Activated CD4-positive, alpha-beta memory T cell treated with anti-CD3 and anti-CD28 coated beads, Interleukin-2, amount 10 ng/mL, durations not matched to agents 7 days and 5 days (primary cell): ENCODE measurements at regions of chr3 and their contacts with region 1.

Region 1: GRCh38 chr3:16842272-16843270 is 42.2 kb upstream of the PLCL2 start:
- DNase-seq: peak; percentile 85
- H3K4me3 Mint-ChIP-seq: peak overlapping the region; percentile 73
- H3K27ac Mint-ChIP-seq: peak overlapping the region; percentile 99
- H3K4me1 Mint-ChIP-seq: peaks cover 67% of the 10 kb centered on the region
- H3K27me3 Mint-ChIP-seq: no peaks in the 10 kb centered on the region

Region 2: GRCh38 chr3:16723978-16724377 is 118.6 kb before region 1 on chr3:
- CTCF ChIA-PET with region 1: no interaction called
- POLR2A ChIA-PET with region 1: no interaction called
- DNase-seq: no peak
- H3K4me3 Mint-ChIP-seq: no peak overlapping the region
- H3K27ac Mint-ChIP-seq: no peak overlapping the region
- H3K4me1 Mint-ChIP-seq: no peaks in the 10 kb centered on the region
- H3K27me3 Mint-ChIP-seq: no peaks in the 10 kb centered on the region

Region 3: GRCh38 chr3:16741103-16741758 is 101.3 kb before region 1 on chr3:
- CTCF ChIA-PET with region 1: no interaction called
- POLR2A ChIA-PET with region 1: no interaction called
- DNase-seq: no peak
- H3K4me3 Mint-ChIP-seq: no peak overlapping the region
- H3K27ac Mint-ChIP-seq: no peak overlapping the region
- H3K4me1 Mint-ChIP-seq: no peaks in the 10 kb centered on the region
- H3K27me3 Mint-ChIP-seq: peaks cover 3% of the 10 kb centered on the region

Region 4: GRCh38 chr3:16828815-16829214 is 13.8 kb before region 1 on chr3:
- CTCF ChIA-PET with region 1: interaction called, 23 read pairs
- POLR2A ChIA-PET with region 1: interaction called, 25 read pairs
- DNase-seq: peak; percentile 67
- H3K4me3 Mint-ChIP-seq: no peak overlapping the region
- H3K27ac Mint-ChIP-seq: no peak overlapping the region
- H3K4me1 Mint-ChIP-seq: peaks cover 18% of the 10 kb centered on the region
- H3K27me3 Mint-ChIP-seq: peaks cover 9% of the 10 kb centered on the region

Region 5: GRCh38 chr3:17151598-17152373 is 309.2 kb after region 1 on chr3:
- CTCF ChIA-PET with region 1: interaction called, 15 read pairs
- POLR2A ChIA-PET with region 1: interaction called, 43 read pairs
- DNase-seq: peak; percentile 95
- H3K4me3 Mint-ChIP-seq: peak overlapping the region; percentile 58
- H3K27ac Mint-ChIP-seq: peak overlapping the region; percentile 85
- H3K4me1 Mint-ChIP-seq: peaks cover 51% of the 10 kb centered on the region
- H3K27me3 Mint-ChIP-seq: no peaks in the 10 kb centered on the region